Endothelial cell of umbilical vein (primary cell): ENCODE measurements at regions of chr5 and their contacts with region 1.

Region 1: DNA sequence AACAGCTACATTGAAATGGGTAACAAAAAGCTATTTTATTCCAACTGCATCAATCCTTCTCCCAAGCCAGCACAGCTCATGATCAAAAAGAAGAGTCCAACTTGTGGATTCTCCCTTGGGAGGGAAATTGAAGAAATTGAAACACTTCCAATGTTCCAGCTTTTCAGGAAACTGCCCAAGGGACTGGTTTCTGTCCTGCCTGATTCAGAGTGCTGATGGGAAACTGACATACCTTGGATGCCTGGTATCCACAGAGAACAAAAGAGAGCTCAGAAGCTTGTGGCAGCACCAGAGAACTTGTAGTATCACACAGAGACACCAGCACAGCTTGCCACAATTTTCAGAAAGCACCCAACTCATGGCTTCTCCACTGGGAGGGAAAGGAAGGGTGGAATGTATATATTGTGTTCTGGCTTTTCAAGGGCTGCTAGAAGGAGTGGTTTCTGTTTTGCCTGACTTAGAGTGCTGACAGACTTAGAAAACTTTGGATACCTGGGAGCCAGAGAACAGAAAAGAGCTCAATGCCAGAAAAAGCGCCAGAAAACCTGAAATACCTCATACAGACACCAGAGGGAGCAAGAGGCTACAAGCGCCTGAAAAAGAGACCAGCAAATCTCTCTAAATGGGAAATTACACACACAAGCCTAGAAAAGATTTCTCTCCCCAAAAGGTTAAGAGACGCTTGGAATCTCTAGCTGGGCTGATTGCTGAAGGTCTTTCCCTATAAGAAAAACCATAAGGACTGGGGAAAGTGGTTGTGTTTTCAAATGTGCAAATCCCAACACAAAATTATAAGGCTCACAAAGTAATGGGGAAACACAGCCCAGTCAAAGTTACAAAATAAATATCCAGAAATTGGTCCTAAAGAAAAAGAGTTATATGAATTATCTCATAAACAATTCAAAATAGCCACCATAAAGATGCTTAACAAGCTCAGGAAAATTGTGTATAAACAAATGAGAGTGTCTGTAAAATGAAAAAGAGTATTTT is 178.8 kb downstream of the SPOCK1 start:
- DNase-seq: peak; percentile 79
- H3K4me3 ChIP-seq: no peak overlapping the region
- H3K27ac ChIP-seq: no peak overlapping the region
- H3K4me1 ChIP-seq: peaks cover 6% of the 10 kb centered on the region
- H3K27me3 ChIP-seq: no peaks in the 10 kb centered on the region
- CTCF ChIP-seq: peak; percentile 72 to 77
- POLR2A ChIP-seq: no peak

Region 2: DNA sequence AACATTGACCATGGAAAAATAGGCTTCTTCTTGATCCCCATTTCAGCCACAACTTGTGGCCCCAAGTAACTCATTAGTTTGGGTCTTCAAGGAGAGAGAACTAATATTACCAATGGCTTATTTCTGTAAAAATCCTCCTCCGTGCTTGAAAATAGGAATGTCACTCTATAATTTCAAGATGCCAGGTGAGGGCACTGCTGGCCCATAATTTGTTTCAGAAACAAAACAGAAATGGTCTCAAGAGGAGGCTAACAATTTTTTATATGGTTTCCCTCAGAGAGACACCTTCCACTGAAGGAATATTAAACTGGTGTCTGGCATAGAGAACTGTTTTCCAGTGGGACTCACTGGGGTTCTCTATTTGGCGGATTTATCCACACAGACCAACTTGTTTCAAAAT is 518.0 kb before region 1 on chr5:
- CTCF ChIA-PET with region 1: interaction called, 41 read pairs
- POLR2A ChIA-PET with region 1: no interaction called
- dilution Hi-C with region 1: no loop called
- intact Hi-C with region 1: loop called (anchors 2 kb)
- DNase-seq: peak; percentile 58
- H3K4me3 ChIP-seq: no peak overlapping the region
- H3K27ac ChIP-seq: no peak overlapping the region
- H3K4me1 ChIP-seq: no peaks in the 10 kb centered on the region
- H3K27me3 ChIP-seq: peaks cover 3 to 12% of the 10 kb centered on the region in 2 experiments
- CTCF ChIP-seq: no peak
- POLR2A ChIP-seq: no peak

Region 3: GRCh38 chr5:137310051-137310730 is 10.2 kb before region 1 on chr5:
- CTCF ChIA-PET with region 1: interaction called, 32 read pairs
- POLR2A ChIA-PET with region 1: interaction called, 8 read pairs
- dilution Hi-C with region 1: no loop called
- intact Hi-C with region 1: no loop called
- DNase-seq: peak; percentile 81
- H3K4me3 ChIP-seq: no peak overlapping the region
- H3K27ac ChIP-seq: peak overlapping the region; percentile 84
- H3K4me1 ChIP-seq: peaks cover 19% of the 10 kb centered on the region
- H3K27me3 ChIP-seq: no peaks in the 10 kb centered on the region
- CTCF ChIP-seq: no peak
- POLR2A ChIP-seq: no peak

Region 4: GRCh38 chr5:137352095-137352494 is 31.7 kb after region 1 on chr5:
- CTCF ChIA-PET with region 1: interaction called, 172 read pairs
- POLR2A ChIA-PET with region 1: no interaction called
- dilution Hi-C with region 1: no loop called
- intact Hi-C with region 1: no loop called
- DNase-seq: no peak
- H3K4me3 ChIP-seq: no peak overlapping the region
- H3K27ac ChIP-seq: no peak overlapping the region
- H3K4me1 ChIP-seq: peaks cover 2% of the 10 kb centered on the region
- H3K27me3 ChIP-seq: no peaks in the 10 kb centered on the region
- CTCF ChIP-seq: no peak
- POLR2A ChIP-seq: no peak

Region 5: DNA sequence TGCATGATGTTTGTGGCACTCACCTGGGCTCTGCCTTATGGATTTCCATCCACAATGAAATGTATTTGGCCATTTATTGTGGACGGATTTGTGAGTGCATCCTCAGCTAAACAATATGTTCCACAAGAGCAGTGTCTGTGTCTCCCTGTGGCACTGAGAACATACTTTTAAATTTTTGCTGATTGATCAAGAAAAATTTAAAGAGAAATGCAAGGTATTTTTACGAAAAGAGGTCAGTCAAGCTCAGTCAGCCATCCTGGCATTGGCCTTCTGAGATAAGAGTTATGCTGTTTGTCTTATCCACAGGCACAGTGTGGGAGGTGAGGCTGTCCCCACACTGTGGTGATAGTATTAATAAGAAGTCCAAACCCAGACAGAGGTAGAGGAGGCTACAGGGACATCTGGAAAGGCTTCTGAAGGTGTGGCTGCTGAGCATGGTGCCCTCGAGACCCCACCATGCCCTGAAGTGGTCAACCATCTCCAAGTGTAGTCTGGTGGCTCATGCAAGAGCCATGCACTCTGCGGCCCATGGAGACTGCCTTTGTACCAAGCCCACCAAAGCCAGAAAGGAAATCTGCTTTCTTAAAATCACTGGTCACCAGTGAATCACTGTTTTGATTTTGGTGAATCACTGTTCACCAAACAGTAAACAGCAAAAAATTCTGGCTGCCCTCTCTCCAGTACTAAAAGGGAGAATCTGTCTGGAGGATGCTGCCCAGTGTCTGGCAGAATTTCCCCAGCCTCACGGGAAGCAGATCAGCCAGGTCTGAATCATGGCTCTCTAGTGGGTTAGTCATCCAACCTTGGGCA is 150.0 kb after region 1 on chr5:
- CTCF ChIA-PET with region 1: interaction called, 15 read pairs
- POLR2A ChIA-PET with region 1: no interaction called
- dilution Hi-C with region 1: no loop called
- intact Hi-C with region 1: no loop called
- DNase-seq: peak; percentile 88
- H3K4me3 ChIP-seq: no peak overlapping the region
- H3K27ac ChIP-seq: peak overlapping the region; percentile 78
- H3K4me1 ChIP-seq: peaks cover 31% of the 10 kb centered on the region
- H3K27me3 ChIP-seq: no peaks in the 10 kb centered on the region
- CTCF ChIP-seq: no peak
- POLR2A ChIP-seq: peak; percentile 33

Region 6: GRCh38 chr5:137498736-137499505 is 178.6 kb after region 1 on chr5 and contains the start of gene SPOCK1:
- CTCF ChIA-PET with region 1: interaction called, 173 read pairs
- POLR2A ChIA-PET with region 1: no interaction called
- dilution Hi-C with region 1: no loop called
- intact Hi-C with region 1: loop called (anchors 1 kb)
- DNase-seq: peak; percentile 81
- H3K4me3 ChIP-seq: peak within 1 kb of the TSS; percentile 54 to 93 (median 56)
- H3K27ac ChIP-seq: peak within 1 kb of the TSS; percentile 39
- H3K4me1 ChIP-seq: peaks cover 20% of the 10 kb centered on the region
- H3K27me3 ChIP-seq: peaks cover 10 to 13% of the 10 kb centered on the region in 2 experiments
- CTCF ChIP-seq: peak; percentile 62 to 81
- POLR2A ChIP-seq: peak; percentile 70
- total RNA-seq, gene SPOCK1: 280 and 404 TPM in 2 replicates

Region 7: DNA sequence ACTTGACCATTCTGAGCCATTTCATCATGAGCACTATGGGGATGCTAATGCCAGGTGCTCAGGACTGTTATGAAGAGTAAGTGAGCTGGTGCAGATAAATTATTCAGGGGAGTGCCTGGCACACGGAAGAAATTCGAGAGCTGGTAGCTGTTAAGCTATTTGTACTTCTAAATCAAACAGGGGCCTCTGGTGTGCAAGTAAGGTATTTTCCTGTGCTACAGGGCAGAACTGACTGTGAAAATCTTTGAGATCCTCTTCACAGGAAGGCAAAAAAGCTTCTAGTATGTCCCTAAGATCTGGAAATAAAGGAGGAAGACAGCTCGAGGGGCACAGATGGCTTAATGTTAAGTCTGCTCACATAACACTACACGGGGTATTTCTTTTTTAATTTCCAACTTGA is 285.1 kb after region 1 on chr5:
- CTCF ChIA-PET with region 1: interaction called, 57 read pairs
- POLR2A ChIA-PET with region 1: interaction called, 3 read pairs
- dilution Hi-C with region 1: no loop called
- intact Hi-C with region 1: no loop called
- DNase-seq: peak; percentile 29
- H3K4me3 ChIP-seq: no peak overlapping the region
- H3K27ac ChIP-seq: no peak overlapping the region
- H3K4me1 ChIP-seq: no peaks in the 10 kb centered on the region
- H3K27me3 ChIP-seq: peaks cover 33% of the 10 kb centered on the region in 2 experiments
- CTCF ChIP-seq: peak in 1 of 2 donors; percentile 15
- POLR2A ChIP-seq: no peak